ENCODE measurements at regions of chr12 and their contacts with region 1.

Region 1: DNA sequence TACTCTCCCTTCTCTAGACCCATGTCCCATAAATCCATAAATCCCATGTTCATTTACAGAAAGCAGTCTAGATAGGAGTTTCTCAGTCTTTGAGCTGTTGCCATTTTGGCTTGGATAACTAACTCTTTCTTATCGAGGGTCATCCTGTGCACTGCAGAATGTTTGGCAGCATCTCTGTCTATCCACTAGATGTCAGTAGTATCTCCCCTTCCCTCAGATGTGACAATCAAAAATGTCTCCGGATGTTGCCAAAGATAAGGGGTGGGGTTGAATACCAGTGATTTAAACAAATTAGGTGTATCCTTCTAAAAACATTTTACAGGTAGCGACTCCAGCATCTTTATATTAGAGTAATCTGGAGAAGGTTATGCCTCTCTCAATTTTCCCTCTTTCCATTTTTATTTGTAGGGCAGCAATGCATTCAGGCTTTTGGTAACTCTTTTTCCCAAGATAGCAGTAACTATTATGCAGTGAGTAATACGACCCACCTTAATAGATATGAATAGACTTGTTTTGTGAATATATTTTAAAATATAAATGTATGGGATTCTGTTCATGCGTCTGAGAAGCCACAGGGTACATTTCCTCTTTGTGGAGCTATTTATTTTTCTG is 100.7 kb downstream of the LRRK2 start:
- DNase-seq: peak; percentile 46
- H3K4me3 ChIP-seq: no peak overlapping the region
- H3K27ac ChIP-seq: no peak overlapping the region
- H3K4me1 ChIP-seq: no peaks in the 10 kb centered on the region
- H3K27me3 ChIP-seq: no peaks in the 10 kb centered on the region
- CTCF ChIP-seq: peak; percentile 61
- EP300 ChIP-seq: no peak
- RAD21 ChIP-seq: peak; percentile 67

Region 2: DNA sequence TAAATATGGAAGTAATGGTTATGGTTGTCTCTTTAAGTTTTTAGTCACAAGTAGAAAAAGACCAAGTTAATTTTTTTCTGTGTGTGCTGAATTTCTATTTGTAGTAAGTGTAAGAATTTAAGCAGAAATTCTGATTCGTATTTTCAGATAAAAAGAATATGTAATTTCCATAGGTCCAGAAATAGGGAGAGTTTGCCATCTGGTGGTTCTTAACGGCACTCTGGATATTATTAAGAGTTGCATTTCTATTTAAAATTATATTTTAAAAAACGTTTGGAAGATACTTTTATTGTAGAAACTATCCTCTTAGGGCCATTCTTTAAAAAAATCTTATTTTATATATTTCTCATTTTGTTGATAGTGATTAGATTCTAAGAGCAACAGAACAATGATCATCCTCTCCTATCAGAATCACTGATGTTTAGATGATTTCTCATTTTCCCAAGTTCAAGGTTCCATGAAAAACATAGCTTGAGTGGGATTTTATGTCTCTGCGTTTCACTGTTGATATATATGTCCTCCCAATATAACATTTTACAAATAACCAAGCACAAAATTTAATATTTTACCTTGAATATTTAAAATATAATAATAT is 12.4 kb before region 1 on chr12:
- CTCF ChIA-PET with region 1: interaction called, 13 read pairs
- POLR2A ChIA-PET with region 1: no interaction called
- DNase-seq: peak; percentile 14
- H3K4me3 ChIP-seq: no peak overlapping the region
- H3K27ac ChIP-seq: no peak overlapping the region
- H3K4me1 ChIP-seq: no peaks in the 10 kb centered on the region
- H3K27me3 ChIP-seq: no peaks in the 10 kb centered on the region
- CTCF ChIP-seq: peak; percentile 60
- EP300 ChIP-seq: no peak
- RAD21 ChIP-seq: peak; percentile 79

Region 3: GRCh38 chr12:40336573-40337199 is 11.2 kb after region 1 on chr12:
- CTCF ChIA-PET with region 1: interaction called, 26 read pairs
- POLR2A ChIA-PET with region 1: no interaction called
- DNase-seq: peak; percentile 37
- H3K4me3 ChIP-seq: no peak overlapping the region; a peak in 1 of 4 replicates
- H3K27ac ChIP-seq: no peak overlapping the region
- H3K4me1 ChIP-seq: peaks cover 0 to 2% of the 10 kb centered on the region in 2 experiments; a peak in 1 of 4 replicates
- H3K27me3 ChIP-seq: no peaks in the 10 kb centered on the region
- CTCF ChIP-seq: peak; percentile 55
- EP300 ChIP-seq: no peak
- RAD21 ChIP-seq: peak; percentile 68

Region 4: DNA sequence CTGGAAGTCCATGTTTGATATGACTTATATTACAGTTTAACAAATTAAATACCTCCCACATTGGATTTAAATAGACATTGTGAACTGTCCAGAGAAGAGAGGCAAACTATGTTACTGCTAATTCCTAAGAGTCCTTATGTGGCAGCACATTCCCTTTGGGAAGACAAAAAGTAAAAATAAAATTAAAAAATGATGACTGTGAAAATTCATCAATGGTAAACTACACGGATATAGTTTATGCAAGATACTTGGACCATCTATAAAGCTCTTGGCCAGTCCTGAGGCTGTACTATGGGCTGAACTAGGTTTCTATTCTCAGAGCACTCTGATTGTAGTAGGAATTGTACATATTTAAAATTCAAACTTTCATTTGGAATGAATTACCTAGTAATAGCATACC is 105.7 kb after region 1 on chr12:
- CTCF ChIA-PET with region 1: no interaction called
- POLR2A ChIA-PET with region 1: no interaction called
- DNase-seq: no peak
- H3K4me3 ChIP-seq: no peak overlapping the region
- H3K27ac ChIP-seq: no peak overlapping the region
- H3K4me1 ChIP-seq: no peaks in the 10 kb centered on the region
- H3K27me3 ChIP-seq: no peaks in the 10 kb centered on the region
- CTCF ChIP-seq: no peak
- EP300 ChIP-seq: no peak
- RAD21 ChIP-seq: no peak